ENCODE measurements at regions of chr15 and their contacts with region 1.

Region 1: GRCh38 chr15:63600616-63601025 is 3.4 kb downstream of the FBXL22 start:
- DNase-seq: peak; percentile 94 to 96
- ATAC-seq: peak; percentile 70 to 79
- H3K4me3 ChIP-seq: peak overlapping the region; percentile 83
- H3K27ac ChIP-seq: peak overlapping the region; percentile 91 to 93
- H3K4me1 ChIP-seq: peaks cover 20% of the 10 kb centered on the region; the same call in 2 of the 3 replicates
- CTCF ChIP-seq: peak; percentile 46; the same call in 1 of the 3 replicates
- EP300 ChIP-seq: no peak
- POLR2A ChIP-seq: peak; percentile 97
- RAD21 ChIP-seq: no peak; a peak in 1 of 5 replicates

Region 2: DNA sequence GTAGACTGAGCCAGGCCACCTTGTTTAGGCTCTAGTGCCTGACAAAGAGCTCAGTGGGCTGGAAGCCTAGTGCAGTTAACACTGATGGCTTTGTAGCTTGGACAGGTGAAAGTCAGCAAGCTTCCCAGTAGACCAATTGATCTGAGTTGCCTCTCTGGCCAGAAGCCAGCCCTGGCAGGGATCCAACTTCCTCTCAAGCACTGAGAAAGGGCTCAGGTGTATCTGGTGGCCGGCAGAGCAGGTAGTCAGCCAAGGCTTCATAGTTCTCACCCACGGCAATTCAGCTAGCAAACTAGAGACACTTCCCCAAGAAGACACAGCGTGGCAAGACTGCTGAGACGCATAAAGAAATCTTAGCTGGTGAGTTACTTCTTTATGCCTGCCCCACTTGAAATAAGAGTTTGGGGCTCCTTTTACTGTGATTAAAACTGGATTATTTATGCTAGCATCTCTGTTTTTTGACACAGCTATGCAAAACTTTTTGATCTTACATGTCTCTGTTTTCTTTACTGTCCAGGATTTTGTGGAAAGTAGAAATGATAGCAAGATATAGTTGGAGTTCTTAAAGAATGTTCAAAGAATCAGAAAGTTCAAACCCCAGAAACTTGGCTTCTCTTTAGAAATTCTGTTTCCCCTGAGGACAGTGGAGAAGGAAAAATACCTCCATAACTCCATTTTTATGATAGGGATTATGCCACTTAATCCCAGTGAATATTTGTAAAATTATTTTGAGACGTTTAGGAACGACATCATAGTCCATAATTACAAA is 210.5 kb before region 1 on chr15:
- CTCF ChIA-PET with region 1: no interaction called
- POLR2A ChIA-PET with region 1: no interaction called
- DNase-seq: no peak
- ATAC-seq: no peak
- H3K4me3 ChIP-seq: no peak overlapping the region
- H3K27ac ChIP-seq: no peak overlapping the region
- H3K4me1 ChIP-seq: no peaks in the 10 kb centered on the region
- CTCF ChIP-seq: no peak
- EP300 ChIP-seq: no peak
- POLR2A ChIP-seq: no peak
- RAD21 ChIP-seq: no peak

Region 3: DNA sequence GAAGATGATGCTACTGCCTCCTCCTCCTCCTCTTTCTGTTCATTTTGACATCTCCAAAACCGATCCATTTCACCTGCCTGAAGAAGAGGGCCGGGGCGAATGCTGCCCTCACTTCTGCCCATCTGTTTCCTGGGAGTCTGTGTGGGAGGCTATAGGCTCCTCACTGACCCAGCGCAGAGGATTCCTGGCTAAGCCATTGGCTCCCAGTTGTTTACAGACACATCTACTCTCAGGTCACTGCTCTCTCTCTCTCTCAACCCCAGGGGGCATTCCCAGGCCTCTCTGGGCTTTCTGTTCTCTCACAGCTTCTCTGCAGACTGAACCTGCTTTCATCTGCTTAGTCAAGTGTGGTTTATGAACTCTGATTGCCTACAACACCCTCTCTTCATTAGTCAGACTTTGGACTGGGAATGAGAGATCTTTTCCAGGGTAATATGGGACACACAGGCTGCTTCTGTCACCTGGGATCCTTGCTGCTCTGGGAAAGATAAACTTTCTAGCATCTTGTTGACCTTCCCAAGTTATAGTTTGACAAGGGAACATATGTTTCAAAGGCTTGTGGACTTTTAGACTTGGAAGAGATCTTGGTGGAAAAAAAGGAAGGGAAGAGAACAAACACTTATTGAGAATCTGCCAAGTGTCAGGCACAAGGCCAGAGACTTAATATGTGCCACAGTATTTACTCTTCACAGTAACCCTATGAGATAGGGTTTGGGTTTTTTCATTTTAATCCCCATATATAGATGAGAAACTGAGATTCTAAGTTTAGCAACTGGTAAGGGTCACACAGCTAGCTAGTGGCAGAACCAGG is 126.4 kb before region 1 on chr15:
- CTCF ChIA-PET with region 1: interaction called, 13 read pairs
- POLR2A ChIA-PET with region 1: no interaction called
- DNase-seq: peak in 1 of 2 experiments; percentile 95
- ATAC-seq: peak; percentile 82
- H3K4me3 ChIP-seq: no peak overlapping the region
- H3K27ac ChIP-seq: peak overlapping the region; percentile 81 to 90
- H3K4me1 ChIP-seq: peaks cover 59% of the 10 kb centered on the region
- CTCF ChIP-seq: no peak
- EP300 ChIP-seq: peak; percentile 24 to 45; a peak in 3 of 5 replicates
- POLR2A ChIP-seq: no peak
- RAD21 ChIP-seq: peak; percentile 25 to 43; a peak in 2 of 5 replicates

Region 4: DNA sequence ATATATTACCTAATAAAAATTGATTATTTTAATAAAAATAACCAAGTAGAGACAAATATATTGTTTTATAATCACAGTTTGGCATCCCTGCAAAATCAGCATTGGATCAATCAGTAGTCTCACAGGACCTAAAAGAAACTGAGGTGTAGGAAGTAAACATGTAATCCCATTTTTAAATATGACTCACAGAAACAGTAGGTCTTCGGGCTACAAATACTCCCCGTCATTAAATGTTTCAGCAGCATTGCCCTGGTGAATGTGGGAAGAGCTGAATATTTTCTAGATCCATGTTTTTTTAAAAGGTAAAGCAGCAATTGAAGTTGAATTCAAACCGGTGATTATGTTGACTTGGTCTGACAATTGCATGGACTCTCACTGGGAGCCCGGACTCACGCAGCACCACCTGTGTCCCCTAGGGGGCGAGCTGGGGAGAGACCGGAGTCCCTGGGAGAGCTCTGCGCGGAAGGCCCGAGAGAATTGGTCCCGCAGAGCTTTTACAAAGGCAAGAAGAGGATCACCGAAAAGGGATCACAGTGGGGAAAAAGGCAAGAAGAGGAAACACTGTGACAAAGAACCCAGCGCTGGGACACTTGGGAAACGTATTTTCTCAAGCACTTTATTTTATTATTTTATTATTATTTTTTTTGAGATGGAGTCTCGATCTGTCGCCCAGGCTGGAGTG is 113.4 kb before region 1 on chr15:
- CTCF ChIA-PET with region 1: interaction called, 34 read pairs
- POLR2A ChIA-PET with region 1: no interaction called
- DNase-seq: peak; percentile 90 to 96
- ATAC-seq: peak; percentile 90 to 91
- H3K4me3 ChIP-seq: no peak overlapping the region
- H3K27ac ChIP-seq: peak overlapping the region; percentile 60 to 74
- H3K4me1 ChIP-seq: peaks cover 59% of the 10 kb centered on the region
- CTCF ChIP-seq: peak; percentile 95
- EP300 ChIP-seq: no peak
- POLR2A ChIP-seq: no peak
- RAD21 ChIP-seq: peak; percentile 91 to 92

Region 5: GRCh38 chr15:63514531-63514943 is 86.1 kb before region 1 on chr15:
- CTCF ChIA-PET with region 1: interaction called, 13 read pairs
- POLR2A ChIA-PET with region 1: interaction called, 3 read pairs
- DNase-seq: peak; percentile 57 to 86
- ATAC-seq: peak; percentile 60 to 87
- H3K4me3 ChIP-seq: peak overlapping the region; percentile 30
- H3K27ac ChIP-seq: peak overlapping the region; percentile 77 to 78
- H3K4me1 ChIP-seq: peaks cover 94% of the 10 kb centered on the region
- CTCF ChIP-seq: no peak
- EP300 ChIP-seq: peak; percentile 86 to 89; a peak in 3 of 5 replicates
- POLR2A ChIP-seq: no peak
- RAD21 ChIP-seq: 0 out of 5 replicates have a peak, but pooled peaks of 1 of the 2 experiments have one; percentile 22

Region 6: GRCh38 chr15:63539521-63539920 is 61.1 kb before region 1 on chr15:
- CTCF ChIA-PET with region 1: interaction called, 11 read pairs
- POLR2A ChIA-PET with region 1: no interaction called
- DNase-seq: no peak
- ATAC-seq: peak in 1 of 2 experiments; percentile 25; a peak in 1 of 6 replicates
- H3K4me3 ChIP-seq: no peak overlapping the region
- H3K27ac ChIP-seq: no peak overlapping the region
- H3K4me1 ChIP-seq: peaks cover 48% of the 10 kb centered on the region
- CTCF ChIP-seq: no peak
- EP300 ChIP-seq: no peak
- POLR2A ChIP-seq: no peak
- RAD21 ChIP-seq: no peak

Region 7: DNA sequence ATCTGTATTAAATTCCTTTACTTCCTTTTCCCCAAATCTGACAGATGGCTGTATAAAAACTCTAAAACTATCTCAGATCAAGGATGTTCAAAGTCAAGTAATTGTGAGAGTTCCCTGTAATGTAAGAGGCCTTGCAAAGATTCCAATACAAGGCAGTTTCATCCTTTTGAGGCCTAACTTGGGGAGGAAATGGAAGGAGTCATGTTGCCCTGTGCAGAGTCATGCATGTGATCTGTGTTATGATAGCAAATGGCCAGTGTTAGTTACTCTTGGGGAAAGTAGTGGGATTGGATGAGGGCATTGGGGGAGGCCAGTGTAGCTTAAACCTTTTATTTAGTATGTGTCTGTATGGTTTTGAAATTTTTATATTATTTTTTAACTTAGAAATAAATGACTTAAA is 27.1 kb before region 1 on chr15:
- CTCF ChIA-PET with region 1: interaction called, 53 read pairs
- POLR2A ChIA-PET with region 1: no interaction called
- DNase-seq: no peak
- ATAC-seq: no peak
- H3K4me3 ChIP-seq: no peak overlapping the region
- H3K27ac ChIP-seq: no peak overlapping the region
- H3K4me1 ChIP-seq: no peaks in the 10 kb centered on the region
- CTCF ChIP-seq: no peak
- EP300 ChIP-seq: no peak
- POLR2A ChIP-seq: no peak
- RAD21 ChIP-seq: no peak

Region 8: GRCh38 chr15:63582718-63583426 is 17.7 kb before region 1 on chr15:
- CTCF ChIA-PET with region 1: interaction called, 53 read pairs
- POLR2A ChIA-PET with region 1: no interaction called
- DNase-seq: peak in 1 of 2 experiments; percentile 34
- ATAC-seq: peak; percentile 38 to 54
- H3K4me3 ChIP-seq: no peak overlapping the region
- H3K27ac ChIP-seq: no peak overlapping the region
- H3K4me1 ChIP-seq: peaks cover 24% of the 10 kb centered on the region
- CTCF ChIP-seq: no peak
- EP300 ChIP-seq: no peak
- POLR2A ChIP-seq: no peak
- RAD21 ChIP-seq: no peak

Measured in A549 (cell line).